Activated T-helper 1 cell treated with anti-CD3 and anti-CD28 coated beads, Interleukin-12 subunit alpha, Interleukin-12 subunit beta, Interleukin-2, Interleukin-4 antibody, amounts not matched to agents 30 ng/mL and 10 ng/mL and 1 ng/mL, durations not matched to agents 14 hours and 24 hours and 36 hours (primary cell): ENCODE measurements at regions of chrX and their contacts with region 1.

Region 1: GRCh38 chrX:11758400-11759171 is 549 bp downstream of the MSL3 start:
- DNase-seq: peak; percentile 84
- H3K4me3 Mint-ChIP-seq: peak overlapping the region; percentile 98
- H3K27ac Mint-ChIP-seq: peak overlapping the region; percentile 98
- H3K4me1 Mint-ChIP-seq: peaks cover 18% of the 10 kb centered on the region
- H3K27me3 Mint-ChIP-seq: peaks cover 25% of the 10 kb centered on the region

Region 2: DNA sequence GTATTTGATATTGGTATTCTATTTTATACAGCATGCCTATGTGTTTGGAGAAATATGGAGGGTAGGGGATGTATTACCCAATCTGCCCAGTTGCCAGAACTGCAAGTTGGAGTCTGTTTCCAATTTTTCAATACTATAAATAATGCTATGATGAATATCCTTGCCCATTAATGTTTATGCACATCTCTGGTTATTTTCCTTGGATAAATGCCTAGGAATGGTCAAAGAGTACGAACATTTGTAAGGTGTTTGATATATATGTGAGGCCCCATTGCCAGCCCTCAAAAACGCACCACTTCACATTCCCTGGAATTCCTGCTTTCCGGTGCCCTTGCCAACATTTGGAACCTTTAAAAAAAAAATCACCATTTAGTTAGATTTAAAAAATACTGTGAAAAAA is 1757.1 kb before region 1 on chrX:
- intact Hi-C with region 1: loop called (anchors 5 kb)
- DNase-seq: no peak
- H3K4me3 Mint-ChIP-seq: no peak overlapping the region
- H3K27ac Mint-ChIP-seq: no peak overlapping the region
- H3K4me1 Mint-ChIP-seq: peaks cover 44% of the 10 kb centered on the region
- H3K27me3 Mint-ChIP-seq: peaks cover 2% of the 10 kb centered on the region

Region 3: DNA sequence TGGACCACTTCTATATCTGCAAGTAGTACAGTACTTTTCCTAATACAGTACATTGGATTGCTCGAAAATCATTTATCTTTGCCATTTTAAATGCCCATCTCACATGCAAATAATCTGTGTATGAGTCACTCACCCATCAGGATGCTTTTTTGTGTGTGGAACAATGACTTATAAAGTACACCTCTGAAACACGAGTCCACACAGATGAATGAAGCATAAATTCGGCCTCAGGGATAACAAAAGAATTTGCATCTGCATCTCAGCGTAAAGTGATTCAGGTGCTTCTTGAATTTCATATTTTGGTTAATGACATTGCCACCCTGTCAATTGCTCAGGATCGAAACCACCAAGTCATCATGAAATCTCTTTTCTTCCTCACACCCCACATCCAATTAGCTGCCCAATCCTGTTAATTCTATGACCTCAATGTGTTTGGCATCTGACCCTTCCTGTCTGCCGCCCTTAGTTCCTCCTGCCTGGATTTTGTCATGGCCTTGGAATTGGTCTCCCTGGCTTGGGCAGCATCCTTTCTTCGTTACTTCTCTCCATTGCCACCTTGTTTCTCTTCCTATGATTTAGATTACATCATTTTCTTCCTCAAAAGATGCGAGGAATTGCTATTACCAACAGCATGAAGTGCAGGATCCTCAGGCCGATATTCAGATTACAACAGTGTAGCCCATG is 976.6 kb before region 1 on chrX:
- intact Hi-C with region 1: no loop called
- DNase-seq: no peak
- H3K4me3 Mint-ChIP-seq: no peak overlapping the region
- H3K27ac Mint-ChIP-seq: no peak overlapping the region
- H3K4me1 Mint-ChIP-seq: no peaks in the 10 kb centered on the region
- H3K27me3 Mint-ChIP-seq: no peaks in the 10 kb centered on the region

Region 4: DNA sequence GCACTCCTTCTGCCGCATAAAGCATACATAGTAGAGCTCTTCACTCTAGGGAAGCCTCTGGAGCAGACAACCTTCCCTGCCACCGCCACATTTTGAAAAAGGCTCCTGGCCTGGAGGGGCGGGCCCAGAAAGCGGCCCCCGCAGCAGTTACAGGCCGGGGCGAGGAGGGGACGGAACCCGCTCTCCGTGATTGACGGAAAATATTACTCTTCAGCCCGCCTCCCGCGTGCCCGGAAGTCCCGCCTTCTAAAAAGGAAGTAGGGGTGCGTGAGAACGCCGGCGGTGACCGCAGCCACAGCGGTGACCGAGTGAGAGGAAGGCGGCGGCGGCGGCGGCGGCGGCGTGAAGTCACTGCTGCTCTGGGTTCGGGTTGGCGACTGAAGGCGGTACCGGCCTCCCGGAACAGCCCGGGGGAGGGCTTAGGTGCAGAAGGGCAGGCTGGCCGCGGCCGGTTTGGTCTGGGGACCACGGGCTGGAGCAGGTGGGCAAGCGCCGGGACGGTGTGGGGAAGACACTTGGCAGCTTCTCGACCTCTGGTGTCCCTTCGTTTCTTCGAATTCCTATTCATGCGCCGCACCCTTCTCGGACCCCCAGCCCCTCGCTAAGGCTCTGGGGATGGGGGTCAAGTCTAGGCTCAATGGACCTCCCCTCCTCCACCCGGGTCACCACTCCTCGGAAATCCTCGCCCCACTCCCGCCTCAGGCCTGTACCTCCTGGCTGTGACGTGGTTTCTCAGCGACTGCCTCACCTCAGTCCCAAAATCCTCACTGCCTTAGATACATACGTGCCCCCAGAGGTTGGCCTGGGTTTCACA is 647.3 kb before region 1 on chrX and contains the start of gene HCCS:
- intact Hi-C with region 1: loop called (anchors 2 kb)
- DNase-seq: peak; percentile 79
- H3K4me3 Mint-ChIP-seq: peak within 1 kb of the TSS; percentile 92
- H3K27ac Mint-ChIP-seq: peak within 1 kb of the TSS; percentile 97
- H3K4me1 Mint-ChIP-seq: peaks cover 21% of the 10 kb centered on the region
- H3K27me3 Mint-ChIP-seq: no peaks in the 10 kb centered on the region
- total RNA-seq, gene HCCS: 30.6 and 31.2 TPM in 2 replicates

Region 5: GRCh38 chrX:11215191-11215921 is 543.2 kb before region 1 on chrX:
- intact Hi-C with region 1: no loop called
- DNase-seq: no peak
- H3K4me3 Mint-ChIP-seq: no peak overlapping the region
- H3K27ac Mint-ChIP-seq: no peak overlapping the region
- H3K4me1 Mint-ChIP-seq: no peaks in the 10 kb centered on the region
- H3K27me3 Mint-ChIP-seq: no peaks in the 10 kb centered on the region

Region 6: GRCh38 chrX:11609109-11609730 is 149.4 kb before region 1 on chrX:
- intact Hi-C with region 1: no loop called
- DNase-seq: no peak
- H3K4me3 Mint-ChIP-seq: no peak overlapping the region
- H3K27ac Mint-ChIP-seq: no peak overlapping the region
- H3K4me1 Mint-ChIP-seq: no peaks in the 10 kb centered on the region
- H3K27me3 Mint-ChIP-seq: peaks cover 4% of the 10 kb centered on the region

Region 7: GRCh38 chrX:11733614-11734013 is 25.0 kb before region 1 on chrX:
- intact Hi-C with region 1: no loop called
- DNase-seq: no peak
- H3K4me3 Mint-ChIP-seq: no peak overlapping the region
- H3K27ac Mint-ChIP-seq: no peak overlapping the region
- H3K4me1 Mint-ChIP-seq: no peaks in the 10 kb centered on the region
- H3K27me3 Mint-ChIP-seq: peaks cover 19% of the 10 kb centered on the region

Region 8: GRCh38 chrX:11792461-11793421 is 34.2 kb after region 1 on chrX:
- intact Hi-C with region 1: loop called (anchors 1 kb)
- DNase-seq: peak; percentile 40
- H3K4me3 Mint-ChIP-seq: peak overlapping the region; percentile 12
- H3K27ac Mint-ChIP-seq: peak overlapping the region; percentile 97
- H3K4me1 Mint-ChIP-seq: peaks cover 19% of the 10 kb centered on the region
- H3K27me3 Mint-ChIP-seq: no peaks in the 10 kb centered on the region

Region 9: GRCh38 chrX:12894074-12895030 is 1135.8 kb after region 1 on chrX:
- intact Hi-C with region 1: loop called (anchors 10 kb)
- DNase-seq: peak; percentile 31
- H3K4me3 Mint-ChIP-seq: no peak overlapping the region
- H3K27ac Mint-ChIP-seq: no peak overlapping the region
- H3K4me1 Mint-ChIP-seq: peaks cover 53% of the 10 kb centered on the region
- H3K27me3 Mint-ChIP-seq: peaks cover 4% of the 10 kb centered on the region